ENCODE measurements at regions of chr22 and their contacts with region 1.

Region 1: GRCh38 chr22:35539910-35540594 is 579 bp upstream of the RASD2 start:
- DNase-seq: peak; percentile 38 to 82 (median 67)
- ATAC-seq: peak; percentile 85
- H3K4me3 ChIP-seq: peak overlapping the region; percentile 57 to 62
- H3K4me3 Mint-ChIP-seq: peak overlapping the region; percentile 78
- H3K27ac ChIP-seq: no peak overlapping the region
- H3K27ac Mint-ChIP-seq: no peak overlapping the region
- H3K4me1 ChIP-seq: peaks cover 16% of the 10 kb centered on the region
- H3K4me1 Mint-ChIP-seq: peaks cover 17% of the 10 kb centered on the region
- H3K27me3 ChIP-seq: peaks cover 16 to 23% of the 10 kb centered on the region in 2 experiments
- H3K27me3 Mint-ChIP-seq: peaks cover 26% of the 10 kb centered on the region
- CTCF ChIP-seq: no peak

Region 2: GRCh38 chr22:35477911-35478582 is 62.0 kb before region 1 on chr22:
- CTCF ChIA-PET with region 1: no interaction called
- POLR2A ChIA-PET with region 1: no interaction called
- intact Hi-C with region 1: no loop called
- DNase-seq: no peak
- ATAC-seq: no peak
- H3K4me3 ChIP-seq: no peak overlapping the region
- H3K4me3 Mint-ChIP-seq: no peak overlapping the region
- H3K27ac ChIP-seq: no peak overlapping the region
- H3K27ac Mint-ChIP-seq: no peak overlapping the region
- H3K4me1 ChIP-seq: no peaks in the 10 kb centered on the region
- H3K4me1 Mint-ChIP-seq: peaks cover 5% of the 10 kb centered on the region
- H3K27me3 ChIP-seq: peaks cover 0 to 2% of the 10 kb centered on the region in 2 experiments
- H3K27me3 Mint-ChIP-seq: peaks cover 30% of the 10 kb centered on the region
- CTCF ChIP-seq: no peak

Region 3: DNA sequence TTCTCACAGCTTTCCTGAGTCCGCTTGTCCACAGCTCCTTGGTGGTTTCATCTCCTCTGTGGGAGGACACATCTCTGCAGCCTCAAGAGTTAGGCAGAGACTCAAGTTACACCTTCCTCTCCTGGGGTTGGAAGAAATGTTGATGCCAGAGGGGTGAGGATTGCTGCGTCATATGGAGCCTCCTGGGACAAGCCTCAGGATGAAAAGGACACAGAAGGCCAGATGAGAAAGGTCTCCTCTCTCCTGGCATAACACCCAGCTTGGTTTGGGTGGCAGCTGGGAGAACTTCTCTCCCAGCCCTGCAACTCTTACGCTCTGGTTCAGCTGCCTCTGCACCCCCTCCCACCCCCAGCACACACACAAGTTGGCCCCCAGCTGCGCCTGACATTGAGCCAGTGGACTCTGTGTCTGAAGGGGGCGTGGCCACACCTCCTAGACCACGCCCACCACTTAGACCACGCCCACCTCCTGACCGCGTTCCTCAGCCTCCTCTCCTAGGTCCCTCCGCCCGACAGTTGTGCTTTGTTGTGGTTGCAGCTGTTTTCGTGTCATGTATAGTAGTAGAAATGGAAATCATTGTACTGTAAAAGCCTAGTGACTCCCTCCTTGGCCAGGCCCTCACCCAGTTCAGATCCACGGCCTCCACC is 12.3 kb after region 1 on chr22:
- CTCF ChIA-PET with region 1: interaction called, 5 read pairs
- POLR2A ChIA-PET with region 1: interaction called, 3 read pairs
- intact Hi-C with region 1: loop called (anchors 1 kb)
- DNase-seq: peak; percentile 61 to 89 (median 82)
- ATAC-seq: peak; percentile 93
- H3K4me3 ChIP-seq: peak overlapping the region in 1 of 2 experiments; percentile 9
- H3K4me3 Mint-ChIP-seq: peak overlapping the region; percentile 9
- H3K27ac ChIP-seq: no peak overlapping the region
- H3K27ac Mint-ChIP-seq: no peak overlapping the region
- H3K4me1 ChIP-seq: peaks cover 14% of the 10 kb centered on the region
- H3K4me1 Mint-ChIP-seq: peaks cover 16% of the 10 kb centered on the region
- H3K27me3 ChIP-seq: no peaks in the 10 kb centered on the region
- H3K27me3 Mint-ChIP-seq: peaks cover under 1% of the 10 kb centered on the region
- CTCF ChIP-seq: no peak

Region 4: GRCh38 chr22:36028646-36029405 is 488.8 kb after region 1 on chr22 and contains the start of gene RBFOX2:
- CTCF ChIA-PET with region 1: no interaction called
- POLR2A ChIA-PET with region 1: no interaction called
- intact Hi-C with region 1: loop called in 1 of 2 experiments (anchors 10 kb)
- DNase-seq: peak; percentile 13 to 76 (median 57)
- ATAC-seq: peak; percentile 73
- H3K4me3 ChIP-seq: peak within 1 kb of the TSS; percentile 50 to 56
- H3K4me3 Mint-ChIP-seq: peak within 1 kb of the TSS; percentile 91
- H3K27ac ChIP-seq: no peak within 1 kb of the TSS
- H3K27ac Mint-ChIP-seq: peak within 1 kb of the TSS; percentile 75
- H3K4me1 ChIP-seq: peaks cover 13% of the 10 kb centered on the region
- H3K4me1 Mint-ChIP-seq: peaks cover 22% of the 10 kb centered on the region
- H3K27me3 ChIP-seq: peaks cover 0 to 7% of the 10 kb centered on the region in 2 experiments
- H3K27me3 Mint-ChIP-seq: peaks cover 8% of the 10 kb centered on the region
- CTCF ChIP-seq: no peak
- total RNA-seq, gene RBFOX2: 0.79 to 0.94 TPM

Measured in CD8-positive, alpha-beta T cell (primary cell).